ENCODE measurements at regions of chr19 and their contacts with region 1.

Region 1: GRCh38 chr19:34712395-34713261 is 21.4 kb upstream of the ZNF181 start:
- DNase-seq: no peak

Region 2: DNA sequence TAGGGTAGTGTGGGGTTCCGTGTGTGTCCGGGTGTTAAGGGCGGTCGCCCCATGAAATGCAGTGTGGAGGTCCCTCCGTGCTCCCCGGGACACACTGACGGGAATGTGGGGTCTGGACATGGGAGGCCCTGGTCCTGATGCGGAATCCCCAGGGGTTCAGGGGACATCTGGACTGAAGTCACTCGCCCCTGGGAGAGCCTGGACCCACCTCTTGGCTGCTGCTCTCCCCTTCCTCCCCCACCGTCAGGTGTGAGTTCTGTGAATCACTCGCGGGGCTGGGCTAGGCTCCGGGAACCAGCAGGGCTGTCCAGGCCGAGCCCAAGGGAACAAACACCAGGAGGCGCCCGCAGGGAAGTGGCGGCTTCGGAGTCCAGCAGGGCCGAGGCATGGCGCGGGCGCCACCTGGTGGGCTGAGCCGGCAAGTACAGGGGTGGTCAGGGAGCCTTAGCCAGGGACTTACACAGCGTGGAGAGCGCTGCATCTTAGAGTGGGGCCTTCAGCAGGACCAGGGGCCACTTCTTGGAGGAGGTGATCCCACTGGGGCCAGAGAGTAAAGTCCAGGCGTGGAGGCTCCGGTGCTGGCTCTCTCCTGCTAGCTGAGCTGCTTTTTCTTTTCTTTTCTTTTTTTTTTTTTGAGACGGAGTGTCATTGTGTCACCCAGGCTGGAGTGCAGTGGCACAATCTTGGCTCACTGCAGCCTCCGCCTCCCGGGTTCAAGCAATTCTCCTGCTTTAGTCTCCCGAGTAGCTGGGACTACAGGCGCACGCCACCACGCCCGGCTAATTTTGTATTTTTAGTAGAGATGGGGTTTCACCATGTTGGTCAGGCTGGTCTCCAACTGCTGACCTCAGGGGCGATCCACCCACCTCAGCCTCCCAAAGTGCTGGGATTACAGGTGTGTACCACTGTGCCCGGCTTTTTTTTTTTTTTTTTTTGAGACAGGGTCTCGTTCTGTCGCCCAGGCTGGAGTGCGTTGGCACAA is 211.0 kb before region 1 on chr19:
- intact Hi-C with region 1: loop called (anchors 5 kb)
- DNase-seq: peak; percentile 96

Region 3: GRCh38 chr19:34639491-34640085 is 73.0 kb before region 1 on chr19:
- intact Hi-C with region 1: loop called (anchors 2 kb)
- DNase-seq: no peak

Region 4: GRCh38 chr19:34649886-34650543 is 62.6 kb before region 1 on chr19:
- intact Hi-C with region 1: no loop called
- DNase-seq: no peak

Region 5: GRCh38 chr19:34888091-34888490 is 175.5 kb after region 1 on chr19:
- intact Hi-C with region 1: no loop called
- DNase-seq: no peak

Measured in cardiac septum (tissue), 1 donor.